ENCODE measurements at regions of chr1 and their contacts with region 1.

Region 1: GRCh38 chr1:119808972-119809550 is 2.2 kb downstream of the REG4 start:
- DNase-seq: peak; percentile 47
- H3K4me3 ChIP-seq: no peak overlapping the region
- H3K27ac ChIP-seq: no peak overlapping the region
- H3K27me3 ChIP-seq: peaks cover 8% of the 10 kb centered on the region
- CTCF ChIP-seq: peak; percentile 94

Region 2: DNA sequence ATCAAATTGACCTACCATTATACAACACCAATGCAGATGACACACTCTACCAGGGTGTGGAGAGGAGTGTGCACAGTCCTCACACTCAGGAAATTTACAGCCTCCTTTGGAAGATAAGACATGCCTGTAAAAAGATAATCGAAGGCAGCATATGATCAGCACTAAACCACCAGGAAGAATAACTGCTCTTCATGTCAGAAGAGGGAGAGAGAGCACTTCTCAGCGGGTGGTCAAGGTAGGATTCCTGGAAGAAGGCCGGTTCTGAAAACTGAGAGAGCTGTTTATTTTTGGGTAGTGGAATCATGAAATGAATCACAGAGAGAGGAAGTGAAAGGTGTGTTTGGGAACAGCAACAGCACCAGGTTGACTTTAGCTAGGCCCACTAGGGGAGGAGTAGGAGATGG is 147.0 kb before region 1 on chr1:
- CTCF ChIA-PET with region 1: no interaction called
- POLR2A ChIA-PET with region 1: no interaction called
- DNase-seq: no peak
- H3K4me3 ChIP-seq: no peak overlapping the region
- H3K27ac ChIP-seq: no peak overlapping the region
- H3K27me3 ChIP-seq: peaks cover 3% of the 10 kb centered on the region
- CTCF ChIP-seq: no peak

Region 3: DNA sequence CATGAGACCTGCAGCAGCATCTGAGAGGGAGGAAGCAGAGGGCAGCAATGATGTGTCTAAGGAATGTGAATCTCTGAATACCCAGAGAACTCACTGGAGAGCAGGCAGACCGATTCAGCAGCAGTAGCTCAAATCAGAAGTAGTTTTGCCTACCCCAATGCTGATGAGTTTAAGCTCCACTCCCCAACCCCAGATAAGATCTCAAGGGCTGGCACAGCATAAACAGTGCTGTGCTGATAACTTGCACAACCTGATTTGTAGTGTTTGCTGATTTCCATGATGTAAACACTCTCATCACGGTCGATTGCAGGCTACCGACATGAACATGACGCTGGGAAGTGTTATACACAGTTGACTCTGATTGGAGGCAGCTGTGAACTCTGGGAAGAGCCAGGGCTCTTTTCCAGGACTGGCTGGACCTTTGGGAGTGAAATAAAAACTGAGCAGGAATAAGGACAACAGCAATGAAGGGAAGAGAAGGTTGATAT is 29.1 kb before region 1 on chr1:
- CTCF ChIA-PET with region 1: interaction called, 14 read pairs
- POLR2A ChIA-PET with region 1: no interaction called
- DNase-seq: no peak
- H3K4me3 ChIP-seq: peak overlapping the region; percentile 36
- H3K27ac ChIP-seq: peak overlapping the region; percentile 21
- H3K27me3 ChIP-seq: peaks cover 5% of the 10 kb centered on the region
- CTCF ChIP-seq: no peak

Region 4: GRCh38 chr1:119795261-119796200 is 13.5 kb before region 1 on chr1:
- CTCF ChIA-PET with region 1: interaction called, 17 read pairs
- POLR2A ChIA-PET with region 1: no interaction called
- DNase-seq: no peak
- H3K4me3 ChIP-seq: no peak overlapping the region
- H3K27ac ChIP-seq: peak overlapping the region; percentile 52
- H3K27me3 ChIP-seq: no peaks in the 10 kb centered on the region
- CTCF ChIP-seq: no peak

Region 5: GRCh38 chr1:119838236-119838635 is 29.2 kb after region 1 on chr1:
- CTCF ChIA-PET with region 1: interaction called, 10 read pairs
- POLR2A ChIA-PET with region 1: no interaction called
- DNase-seq: no peak
- H3K4me3 ChIP-seq: no peak overlapping the region
- H3K27ac ChIP-seq: no peak overlapping the region
- H3K27me3 ChIP-seq: peaks cover 13% of the 10 kb centered on the region
- CTCF ChIP-seq: no peak

Region 6: GRCh38 chr1:119870917-119871596 is 62.0 kb after region 1 on chr1:
- CTCF ChIA-PET with region 1: interaction called, 13 read pairs
- POLR2A ChIA-PET with region 1: no interaction called
- DNase-seq: peak; percentile 50
- H3K4me3 ChIP-seq: no peak overlapping the region
- H3K27ac ChIP-seq: no peak overlapping the region
- H3K27me3 ChIP-seq: no peaks in the 10 kb centered on the region
- CTCF ChIP-seq: peak; percentile 98

Region 7: DNA sequence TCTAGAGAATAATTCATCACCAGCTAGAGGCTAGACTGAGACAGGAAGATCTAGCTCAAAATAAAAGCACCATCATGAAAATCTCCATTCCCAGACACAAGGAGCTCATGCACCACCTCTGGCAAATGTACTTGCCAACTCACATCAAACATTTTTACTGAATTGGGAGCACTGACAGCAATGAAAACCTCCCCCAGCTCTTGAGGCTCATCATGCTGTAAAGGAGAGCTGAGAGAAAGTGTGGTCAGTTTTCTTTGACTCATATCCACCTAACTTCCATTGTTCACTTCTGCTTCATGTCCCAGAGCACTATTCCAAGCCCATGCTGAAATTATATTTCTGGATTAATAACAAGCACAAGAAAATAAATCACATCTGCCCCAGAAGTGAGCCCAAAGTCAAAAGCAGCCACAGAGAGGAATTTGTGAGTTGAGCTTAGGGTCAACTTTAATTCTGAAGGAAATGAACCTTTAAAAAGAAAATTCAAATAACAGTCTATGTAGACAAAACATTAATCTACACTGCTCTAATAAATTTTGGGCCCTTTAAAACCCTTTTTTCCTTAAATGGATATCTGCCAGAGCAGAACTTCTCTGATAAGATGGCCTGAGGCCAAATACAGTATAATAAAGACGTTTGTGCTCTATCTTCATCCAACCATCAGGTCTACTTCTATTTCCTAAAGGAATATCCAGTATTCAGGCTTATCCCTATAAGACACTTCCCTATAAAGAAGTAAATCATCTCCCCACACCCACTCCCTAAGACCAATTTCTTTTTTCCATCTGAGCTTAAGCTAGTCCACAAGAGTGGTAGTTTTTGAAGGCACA is 173.1 kb after region 1 on chr1:
- CTCF ChIA-PET with region 1: no interaction called
- POLR2A ChIA-PET with region 1: no interaction called
- DNase-seq: no peak
- H3K4me3 ChIP-seq: no peak overlapping the region
- H3K27ac ChIP-seq: no peak overlapping the region
- H3K27me3 ChIP-seq: no peaks in the 10 kb centered on the region
- CTCF ChIP-seq: no peak

Region 8: GRCh38 chr1:120133228-120133925 is 324.3 kb after region 1 on chr1:
- CTCF ChIA-PET with region 1: no interaction called
- POLR2A ChIA-PET with region 1: no interaction called
- DNase-seq: no peak
- H3K4me3 ChIP-seq: no peak overlapping the region
- H3K27ac ChIP-seq: no peak overlapping the region
- H3K27me3 ChIP-seq: no peaks in the 10 kb centered on the region
- CTCF ChIP-seq: no peak